Naive thymus-derived CD4-positive, alpha-beta T cell (primary cell): ENCODE measurements at regions of chr17 and their contacts with region 1.

Region 1: GRCh38 chr17:35088881-35089585 is 25.5 kb upstream of the RFFL start:
- DNase-seq: peak; percentile 77 to 95 (median 89)
- ATAC-seq: peak; percentile 94
- H3K4me3 ChIP-seq: peak overlapping the region; percentile 93
- H3K4me3 Mint-ChIP-seq: peak overlapping the region; percentile 93 to 98 (median 94)
- H3K27ac ChIP-seq: peak overlapping the region; percentile 89
- H3K27ac Mint-ChIP-seq: peak overlapping the region; percentile 89 to 97 (median 94)
- H3K4me1 ChIP-seq: peaks cover 13 to 27% of the 10 kb centered on the region in 2 donors
- H3K4me1 Mint-ChIP-seq: peaks cover 21 to 52% (median 44%) of the 10 kb centered on the region in 7 donors
- H3K27me3 ChIP-seq: no peaks in the 10 kb centered on the region
- H3K27me3 Mint-ChIP-seq: no peaks in the 10 kb centered on the region

Region 2: DNA sequence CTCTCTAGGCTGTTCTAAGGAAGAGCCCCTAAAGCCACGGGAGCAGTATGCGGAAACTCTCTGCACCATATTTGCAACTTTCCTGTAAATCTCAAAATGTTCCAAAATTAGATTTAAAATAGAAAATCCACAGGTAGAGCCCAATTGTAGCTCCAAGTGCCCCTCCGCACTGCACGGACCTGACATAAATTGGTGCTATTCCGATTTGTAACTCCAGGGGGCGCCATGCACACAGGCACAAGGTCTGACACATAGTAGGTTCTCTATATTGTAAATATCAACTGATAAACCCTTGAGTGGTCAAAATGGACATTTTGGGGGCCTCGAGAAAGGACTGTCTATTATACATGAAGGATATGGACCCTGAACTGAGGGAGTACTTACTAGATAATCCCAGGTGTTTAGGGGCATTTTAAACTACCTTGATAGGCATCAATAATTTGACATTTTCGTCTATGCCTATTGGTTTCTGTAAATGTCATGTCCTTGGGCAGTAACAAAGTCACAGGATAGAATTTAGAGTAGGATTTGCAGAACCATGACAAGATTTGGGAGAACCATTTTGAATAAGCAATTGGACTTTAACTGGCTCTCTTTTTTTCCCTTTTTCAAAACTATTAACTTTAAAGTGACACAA is 546.2 kb before region 1 on chr17:
- CTCF ChIA-PET with region 1: interaction called, 3 read pairs
- POLR2A ChIA-PET with region 1: no interaction called
- intact Hi-C with region 1: loop called in 1 of 2 experiments (anchors 1 kb)
- DNase-seq: peak; percentile 18 to 58 (median 35)
- ATAC-seq: peak; percentile 62
- H3K4me3 ChIP-seq: no peak overlapping the region
- H3K4me3 Mint-ChIP-seq: no peak overlapping the region
- H3K27ac ChIP-seq: no peak overlapping the region
- H3K27ac Mint-ChIP-seq: no peak overlapping the region
- H3K4me1 ChIP-seq: no peaks in the 10 kb centered on the region
- H3K4me1 Mint-ChIP-seq: no peaks in the 10 kb centered on the region
- H3K27me3 ChIP-seq: no peaks in the 10 kb centered on the region
- H3K27me3 Mint-ChIP-seq: peaks cover 21 to 34% (median 30%) of the 10 kb centered on the region in 5 donors

Region 3: DNA sequence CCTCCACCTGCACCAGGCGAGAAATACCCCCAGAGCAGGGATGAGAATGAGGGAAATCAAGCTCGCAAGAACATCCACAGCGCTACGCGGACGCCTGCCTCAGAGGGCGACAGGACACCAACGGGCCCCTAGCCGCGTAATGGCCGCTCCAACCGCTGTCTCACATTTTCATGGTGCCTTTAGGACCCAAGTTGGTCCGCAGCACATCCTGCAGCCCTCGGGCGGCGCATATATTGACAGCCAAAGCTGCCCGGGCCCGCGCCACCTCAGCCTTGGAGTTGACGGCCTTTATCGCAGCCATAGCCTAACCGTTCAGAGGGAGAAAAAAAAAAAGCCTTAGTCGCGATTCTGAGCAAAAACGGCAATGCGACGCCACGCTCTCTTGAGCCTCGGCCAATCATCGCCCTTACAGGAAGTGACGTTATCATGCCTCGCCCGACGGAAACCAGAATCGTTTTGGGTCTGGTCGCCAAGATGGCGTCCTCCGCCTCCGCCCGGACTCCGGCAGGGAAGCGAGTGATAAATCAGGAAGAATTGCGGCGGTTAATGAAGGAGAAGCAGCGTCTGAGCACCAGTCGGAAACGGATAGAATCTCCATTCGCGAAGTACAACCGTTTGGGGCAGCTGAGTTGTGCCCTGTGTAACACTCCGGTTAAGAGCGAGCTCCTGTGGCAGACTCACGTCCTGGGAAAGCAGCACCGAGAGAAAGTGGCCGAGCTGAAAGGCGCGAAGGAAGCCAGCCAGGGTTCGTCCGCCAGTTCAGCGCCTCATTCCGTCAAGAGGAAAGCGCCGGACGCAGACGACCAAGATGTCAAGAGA is 127.7 kb before region 1 on chr17 and contains the starts of genes CCT6B and ZNF830:
- CTCF ChIA-PET with region 1: interaction called, 3 read pairs
- POLR2A ChIA-PET with region 1: interaction called, 4 read pairs
- intact Hi-C with region 1: loop called (anchors 1 kb)
- DNase-seq: peak; percentile 69 to 94 (median 91)
- ATAC-seq: peak; percentile 95
- H3K4me3 ChIP-seq: peak within 1 kb of the TSS; percentile 94
- H3K4me3 Mint-ChIP-seq: peak within 1 kb of the TSS; percentile 97 to 100 (median 99)
- H3K27ac ChIP-seq: peak within 1 kb of the TSS; percentile 92
- H3K27ac Mint-ChIP-seq: peak within 1 kb of the TSS; percentile 98 to 100 (median 99)
- H3K4me1 ChIP-seq: peaks cover 14 to 16% of the 10 kb centered on the region in 2 donors
- H3K4me1 Mint-ChIP-seq: peaks cover 19 to 38% (median 33%) of the 10 kb centered on the region in 7 donors
- H3K27me3 ChIP-seq: no peaks in the 10 kb centered on the region
- H3K27me3 Mint-ChIP-seq: peaks cover 0 to 10% (median 5%) of the 10 kb centered on the region in 5 donors
- total RNA-seq, gene CCT6B: 1.6 to 3.8 (median 2.4) TPM
- total RNA-seq, gene ZNF830: 26.9 to 47.3 (median 44.9) TPM

Region 4: GRCh38 chr17:35022536-35023063 is 66.4 kb before region 1 on chr17:
- CTCF ChIA-PET with region 1: interaction called, 9 read pairs
- POLR2A ChIA-PET with region 1: interaction called, 20 read pairs
- intact Hi-C with region 1: loop called (anchors 1 kb)
- DNase-seq: peak; percentile 37 to 65 (median 56)
- ATAC-seq: peak; percentile 99
- H3K4me3 ChIP-seq: peak overlapping the region; percentile 18
- H3K4me3 Mint-ChIP-seq: peak overlapping the region; percentile 10 to 84 (median 70)
- H3K27ac ChIP-seq: peak overlapping the region; percentile 74
- H3K27ac Mint-ChIP-seq: peak overlapping the region; percentile 92 to 97 (median 96)
- H3K4me1 ChIP-seq: peaks cover 28 to 36% of the 10 kb centered on the region in 2 donors
- H3K4me1 Mint-ChIP-seq: peaks cover 27 to 79% (median 60%) of the 10 kb centered on the region in 7 donors
- H3K27me3 ChIP-seq: no peaks in the 10 kb centered on the region
- H3K27me3 Mint-ChIP-seq: no peaks in the 10 kb centered on the region

Region 5: DNA sequence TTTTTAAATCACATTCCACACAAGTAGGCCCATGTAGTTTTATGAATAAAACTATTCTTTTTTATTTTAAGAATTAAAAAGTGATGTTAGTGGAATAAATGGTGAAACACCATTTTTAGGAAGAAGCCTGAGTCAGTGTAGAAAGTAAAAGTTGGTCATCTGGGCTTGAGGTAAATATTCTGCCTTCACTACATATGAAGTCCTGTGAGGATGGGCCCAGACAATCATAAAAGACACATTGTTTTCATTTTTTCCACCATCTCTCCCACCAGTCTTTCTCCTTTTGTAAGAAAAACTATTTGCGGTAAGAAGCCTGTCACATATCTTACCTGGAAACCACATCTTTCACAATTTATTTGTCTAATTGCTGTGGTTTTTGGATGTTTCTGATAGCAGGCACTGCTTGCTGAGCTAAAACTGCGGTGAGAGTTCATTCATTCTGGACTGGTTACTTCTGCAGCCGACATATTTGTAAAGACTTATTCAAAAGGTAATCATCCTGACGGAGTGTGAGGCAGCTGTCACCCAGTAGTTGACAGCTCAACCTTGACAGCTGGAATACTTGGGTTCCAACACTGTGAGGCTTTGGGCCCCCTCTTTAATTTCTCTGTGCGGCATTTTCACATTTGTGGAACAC is 14.9 kb before region 1 on chr17:
- CTCF ChIA-PET with region 1: interaction called, 4 read pairs
- POLR2A ChIA-PET with region 1: interaction called, 14 read pairs
- intact Hi-C with region 1: loop called in 1 of 2 experiments (anchors 1 kb)
- DNase-seq: no peak
- ATAC-seq: peak; percentile 41
- H3K4me3 ChIP-seq: no peak overlapping the region
- H3K4me3 Mint-ChIP-seq: peak overlapping the region; percentile 43 to 78 (median 64)
- H3K27ac ChIP-seq: peak overlapping the region; percentile 39
- H3K27ac Mint-ChIP-seq: peak overlapping the region; percentile 56 to 89 (median 81)
- H3K4me1 ChIP-seq: peaks cover 42 to 45% of the 10 kb centered on the region in 2 donors
- H3K4me1 Mint-ChIP-seq: peaks cover 45 to 84% (median 67%) of the 10 kb centered on the region in 7 donors
- H3K27me3 ChIP-seq: no peaks in the 10 kb centered on the region
- H3K27me3 Mint-ChIP-seq: no peaks in the 10 kb centered on the region

Region 6: DNA sequence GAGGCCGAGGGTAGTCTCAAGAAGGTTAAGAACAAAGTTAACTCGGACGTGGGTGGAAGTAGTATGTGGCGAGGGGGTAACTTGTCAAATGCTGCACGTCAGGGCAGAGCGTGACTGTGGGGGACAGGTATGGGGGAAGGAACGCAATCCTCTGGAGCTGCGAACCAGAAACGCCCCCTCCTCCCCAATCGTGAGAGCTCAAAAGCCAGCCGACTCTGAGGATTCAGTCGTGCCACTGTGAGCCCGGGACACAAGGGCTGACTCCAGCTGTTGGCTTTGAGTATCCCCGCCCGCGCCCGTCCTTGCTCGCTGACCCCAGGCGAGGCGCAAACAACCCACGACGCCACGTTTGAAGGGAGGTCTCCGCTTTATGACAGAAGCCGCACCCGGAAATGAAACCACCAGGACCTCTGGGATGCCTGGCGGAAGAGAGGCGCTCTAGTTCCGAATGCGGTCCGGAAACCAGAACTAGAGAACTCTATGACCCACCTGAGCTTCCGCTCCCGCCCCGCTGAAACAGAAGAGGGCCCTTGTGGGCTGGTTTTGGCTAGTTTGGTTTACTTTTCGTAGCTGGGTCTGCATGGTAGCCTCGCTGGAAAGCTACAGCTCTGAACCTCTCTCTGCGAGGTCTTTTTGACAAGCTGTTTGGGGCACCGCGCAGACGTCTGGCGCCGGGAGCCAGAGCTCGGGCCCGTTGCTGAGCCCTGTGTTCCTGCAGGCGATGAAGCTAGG is 489.3 kb after region 1 on chr17 and contains the start of gene PEX12:
- CTCF ChIA-PET with region 1: no interaction called
- POLR2A ChIA-PET with region 1: interaction called, 4 read pairs
- intact Hi-C with region 1: loop called in 1 of 2 experiments (anchors 2 kb)
- DNase-seq: peak; percentile 62 to 94 (median 89)
- ATAC-seq: peak; percentile 99
- H3K4me3 ChIP-seq: peak within 1 kb of the TSS; percentile 86
- H3K4me3 Mint-ChIP-seq: peak within 1 kb of the TSS; percentile 92 to 100 (median 97)
- H3K27ac ChIP-seq: peak within 1 kb of the TSS; percentile 92
- H3K27ac Mint-ChIP-seq: peak within 1 kb of the TSS; percentile 96 to 100 (median 99)
- H3K4me1 ChIP-seq: peaks cover 5 to 12% of the 10 kb centered on the region in 2 donors
- H3K4me1 Mint-ChIP-seq: peaks cover 6 to 40% (median 32%) of the 10 kb centered on the region in 7 donors
- H3K27me3 ChIP-seq: no peaks in the 10 kb centered on the region
- H3K27me3 Mint-ChIP-seq: peaks cover 0 to 2% (median 0%) of the 10 kb centered on the region in 5 donors
- total RNA-seq, gene PEX12: 2.9 to 8.0 (median 5.3) TPM